ENCODE measurements at regions of chr12 and their contacts with region 1.

Region 1: DNA sequence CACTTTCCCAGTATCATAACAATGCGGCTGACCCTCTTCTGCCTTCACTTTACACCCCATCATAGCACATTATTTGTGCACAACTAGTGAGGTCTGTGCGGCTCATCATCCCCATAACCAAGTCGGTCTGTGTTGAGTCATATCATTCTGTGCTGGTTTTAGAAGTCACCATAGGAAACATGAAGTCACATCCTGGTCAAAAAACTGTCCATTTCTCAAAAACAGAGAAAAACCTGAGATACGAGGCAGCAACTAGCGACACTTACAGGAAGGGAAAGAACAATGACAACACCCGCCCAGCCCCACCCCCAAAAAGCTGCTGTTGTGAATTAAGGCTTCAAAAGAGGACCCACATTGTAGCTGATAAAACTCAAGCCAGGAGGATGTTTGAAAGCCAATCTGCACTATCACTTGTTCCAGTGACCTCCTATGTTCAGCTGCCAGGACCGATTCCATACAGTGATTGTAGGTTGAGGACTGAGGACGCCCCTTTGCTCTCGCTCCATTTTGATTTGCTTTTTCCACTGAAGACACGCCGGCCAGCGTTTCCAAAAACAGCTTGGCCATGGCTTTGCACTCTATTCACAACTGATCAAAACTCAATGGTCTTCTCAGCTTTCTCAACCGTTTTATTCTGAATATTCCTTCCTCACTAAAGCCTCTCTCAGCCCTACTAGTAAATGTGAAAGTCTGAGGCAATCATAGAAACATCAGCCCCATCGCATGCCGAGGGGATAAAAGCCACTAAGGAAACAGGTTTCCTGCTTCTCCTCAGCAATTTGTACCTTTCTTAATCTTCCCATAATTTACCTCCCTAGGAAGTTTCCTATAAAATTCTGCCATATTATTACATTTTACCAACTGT is 87.5 kb downstream of the DUSP16 start:
- DNase-seq: peak; percentile 66
- H3K4me3 Mint-ChIP-seq: peak overlapping the region; percentile 60
- H3K27ac Mint-ChIP-seq: peak overlapping the region; percentile 99
- H3K4me1 Mint-ChIP-seq: peaks cover 68% of the 10 kb centered on the region
- H3K27me3 Mint-ChIP-seq: no peaks in the 10 kb centered on the region

Region 2: DNA sequence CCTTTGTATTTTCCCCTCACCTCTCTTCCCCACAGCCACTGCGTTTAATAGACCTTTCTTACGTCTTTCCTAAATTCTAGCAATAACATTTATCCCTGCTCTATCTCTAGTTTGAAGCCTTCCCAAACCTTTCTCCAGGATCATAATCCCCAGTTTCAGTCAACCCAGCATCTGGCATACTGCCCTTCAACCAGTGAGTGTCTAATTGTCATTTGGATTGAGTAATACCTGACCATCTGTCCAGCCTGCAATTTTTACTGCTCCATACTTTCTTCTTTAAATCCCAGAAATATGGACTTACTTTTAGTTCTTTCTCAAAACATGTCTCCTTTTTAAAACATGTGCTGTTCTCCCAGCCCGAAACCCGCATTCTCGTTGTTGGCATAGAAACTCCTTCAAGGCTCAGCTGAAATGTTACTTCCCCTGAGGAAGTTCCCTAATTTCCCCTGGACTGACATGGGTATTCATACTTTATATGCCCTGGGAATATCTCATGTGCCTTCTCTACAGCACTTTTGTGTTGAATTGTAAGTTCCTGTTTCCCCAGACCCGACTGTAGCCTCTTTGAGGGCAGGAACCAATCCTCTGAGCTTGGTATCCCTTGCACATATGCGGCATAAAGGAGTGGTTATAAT is 890.8 kb before region 1 on chr12:
- intact Hi-C with region 1: no loop called
- DNase-seq: no peak
- H3K4me3 Mint-ChIP-seq: no peak overlapping the region
- H3K27ac Mint-ChIP-seq: no peak overlapping the region
- H3K4me1 Mint-ChIP-seq: peaks cover 19% of the 10 kb centered on the region
- H3K27me3 Mint-ChIP-seq: peaks cover 8% of the 10 kb centered on the region

Region 3: GRCh38 chr12:12376646-12377448 is 98.3 kb before region 1 on chr12:
- intact Hi-C with region 1: loop called (anchors 1 kb)
- DNase-seq: peak; percentile 12
- H3K4me3 Mint-ChIP-seq: no peak overlapping the region
- H3K27ac Mint-ChIP-seq: peak overlapping the region; percentile 41
- H3K4me1 Mint-ChIP-seq: peaks cover 39% of the 10 kb centered on the region
- H3K27me3 Mint-ChIP-seq: no peaks in the 10 kb centered on the region

Region 4: GRCh38 chr12:12432364-12432763 is 42.8 kb before region 1 on chr12:
- intact Hi-C with region 1: loop called (anchors 1 kb)
- DNase-seq: no peak
- H3K4me3 Mint-ChIP-seq: no peak overlapping the region
- H3K27ac Mint-ChIP-seq: no peak overlapping the region
- H3K4me1 Mint-ChIP-seq: peaks cover 48% of the 10 kb centered on the region
- H3K27me3 Mint-ChIP-seq: no peaks in the 10 kb centered on the region

Region 5: GRCh38 chr12:12456637-12457036 is 18.5 kb before region 1 on chr12:
- intact Hi-C with region 1: loop called (anchors 1 kb)
- DNase-seq: no peak
- H3K4me3 Mint-ChIP-seq: peak overlapping the region; percentile 58
- H3K27ac Mint-ChIP-seq: peak overlapping the region; percentile 88
- H3K4me1 Mint-ChIP-seq: peaks cover 60% of the 10 kb centered on the region
- H3K27me3 Mint-ChIP-seq: no peaks in the 10 kb centered on the region

Region 6: GRCh38 chr12:12486661-12487240 is 11.6 kb after region 1 on chr12:
- intact Hi-C with region 1: loop called (anchors 1 kb)
- DNase-seq: no peak
- H3K4me3 Mint-ChIP-seq: no peak overlapping the region
- H3K27ac Mint-ChIP-seq: peak overlapping the region; percentile 59
- H3K4me1 Mint-ChIP-seq: peaks cover 55% of the 10 kb centered on the region
- H3K27me3 Mint-ChIP-seq: no peaks in the 10 kb centered on the region

Region 7: DNA sequence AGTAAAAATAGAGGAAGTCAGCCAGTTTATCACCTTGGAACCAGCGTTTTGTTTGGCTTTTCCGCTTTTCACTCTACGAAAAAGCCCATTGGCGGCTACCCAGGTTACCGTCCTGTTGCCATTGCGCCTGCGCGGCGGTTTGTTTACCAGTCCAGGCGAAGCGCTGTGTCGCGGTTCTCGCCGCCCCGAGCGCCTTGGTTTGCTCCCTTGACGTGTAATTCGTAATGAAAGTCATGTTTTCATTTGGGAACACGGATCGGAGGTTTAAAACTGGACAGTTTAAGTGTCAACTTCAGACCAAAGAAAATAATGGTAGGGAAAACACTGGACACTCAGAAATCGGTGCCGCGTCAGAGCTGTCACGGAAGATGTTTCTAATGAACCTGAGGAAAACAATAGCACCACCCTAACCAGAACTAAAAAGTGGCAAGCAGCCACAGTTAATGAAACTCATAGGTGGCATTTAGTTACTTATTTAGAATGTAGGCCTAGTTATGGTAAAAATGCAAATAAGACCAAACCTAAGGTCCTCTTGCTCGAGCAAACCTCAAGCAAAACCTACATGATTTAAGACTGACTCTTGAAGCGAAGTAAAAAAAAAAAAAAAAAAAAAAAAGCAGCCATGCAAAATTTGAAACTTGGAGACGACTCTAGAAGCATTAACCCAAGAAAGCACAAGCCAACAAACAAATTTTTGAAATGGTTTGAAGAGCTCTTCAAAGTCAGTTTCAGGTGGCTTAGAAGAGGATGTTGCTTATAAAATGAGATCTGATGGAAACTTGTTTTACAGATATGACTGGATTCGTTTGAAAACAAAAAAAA is 221.6 kb after region 1 on chr12:
- intact Hi-C with region 1: loop called (anchors 1 kb)
- DNase-seq: peak; percentile 91
- H3K4me3 Mint-ChIP-seq: peak overlapping the region; percentile 96
- H3K27ac Mint-ChIP-seq: peak overlapping the region; percentile 89
- H3K4me1 Mint-ChIP-seq: peaks cover 49% of the 10 kb centered on the region
- H3K27me3 Mint-ChIP-seq: no peaks in the 10 kb centered on the region

Region 8: GRCh38 chr12:12724661-12725545 is 249.7 kb after region 1 on chr12:
- intact Hi-C with region 1: loop called (anchors 1 kb)
- DNase-seq: peak; percentile 88
- H3K4me3 Mint-ChIP-seq: peak overlapping the region; percentile 90
- H3K27ac Mint-ChIP-seq: peak overlapping the region; percentile 96
- H3K4me1 Mint-ChIP-seq: peaks cover 56% of the 10 kb centered on the region
- H3K27me3 Mint-ChIP-seq: peaks cover 3% of the 10 kb centered on the region

Region 9: DNA sequence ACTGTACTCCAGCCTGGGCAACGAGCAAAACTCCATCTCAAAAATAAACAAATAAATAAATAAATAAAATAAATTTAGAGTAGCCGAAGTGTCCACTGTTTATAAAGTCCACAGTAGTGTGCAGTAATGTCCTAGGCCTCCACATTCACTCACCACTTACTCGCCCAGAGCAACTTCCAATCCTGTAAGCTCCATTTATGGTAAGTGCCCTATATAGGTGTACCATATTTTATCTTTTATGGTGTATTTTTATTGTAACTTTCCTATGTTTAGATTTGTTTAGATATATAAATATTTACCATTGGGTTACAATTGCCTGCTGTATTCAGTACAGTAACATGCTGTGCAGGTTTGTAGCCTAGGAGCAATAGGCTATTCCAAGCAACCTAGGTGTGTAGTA is 378.3 kb after region 1 on chr12:
- intact Hi-C with region 1: no loop called
- DNase-seq: no peak
- H3K4me3 Mint-ChIP-seq: no peak overlapping the region
- H3K27ac Mint-ChIP-seq: no peak overlapping the region
- H3K4me1 Mint-ChIP-seq: no peaks in the 10 kb centered on the region
- H3K27me3 Mint-ChIP-seq: no peaks in the 10 kb centered on the region